Breast epithelium (tissue), 4 donors: ENCODE measurements at regions of chr19 and their contacts with region 1.

Region 1: DNA sequence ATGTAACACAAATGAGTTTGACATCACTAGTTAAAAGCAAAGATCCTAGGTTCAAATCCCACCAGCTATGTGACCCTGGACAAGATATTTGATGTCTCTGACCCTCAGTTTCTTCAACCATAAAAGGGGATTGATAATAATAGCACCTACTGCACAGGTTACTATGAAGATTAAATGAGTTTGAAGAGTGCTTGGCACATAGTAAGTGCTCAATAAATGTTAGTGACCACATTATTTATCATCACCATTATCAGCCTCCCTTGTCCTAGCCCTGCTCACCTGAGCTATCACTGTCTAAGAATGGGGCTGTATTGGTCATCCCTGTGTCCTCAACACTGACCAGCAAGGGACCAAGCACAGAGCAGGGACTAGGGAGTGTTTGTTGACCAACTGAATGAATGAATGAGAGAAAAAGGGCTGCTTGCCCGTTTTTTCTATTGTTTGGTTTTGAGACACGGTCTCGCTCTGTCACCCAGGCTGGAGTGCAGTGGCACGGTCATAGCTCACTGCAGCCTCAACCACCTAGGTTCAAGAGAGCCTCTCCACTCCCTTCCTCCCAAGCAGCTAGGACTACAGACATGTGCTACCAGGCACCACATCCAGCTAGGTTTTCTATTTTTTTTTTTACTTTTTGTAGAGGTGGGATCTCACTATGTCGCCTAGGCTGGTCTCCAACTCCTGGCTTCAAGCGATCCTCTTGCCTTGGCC is 26.6 kb upstream of the DACT3 start:
- DNase-seq: no peak
- H3K4me3 ChIP-seq: no peak overlapping the region
- H3K27ac ChIP-seq: no peak overlapping the region
- H3K4me1 ChIP-seq: no peaks in the 10 kb centered on the region
- H3K27me3 ChIP-seq: no peaks in the 10 kb centered on the region
- CTCF ChIP-seq: no peak
- POLR2A ChIP-seq: no peak

Region 2: GRCh38 chr19:46704379-46705076 is 16.9 kb after region 1 on chr19:
- intact Hi-C with region 1: no loop called
- DNase-seq: peak; percentile 41 to 75
- H3K4me3 ChIP-seq: no peak overlapping the region
- H3K27ac ChIP-seq: no peak overlapping the region
- H3K4me1 ChIP-seq: no peaks in the 10 kb centered on the region
- H3K27me3 ChIP-seq: no peaks in the 10 kb centered on the region
- CTCF ChIP-seq: peak; percentile 76 to 90 (median 79)
- POLR2A ChIP-seq: no peak

Region 3: GRCh38 chr19:47221080-47221841 is 533.7 kb after region 1 on chr19:
- intact Hi-C with region 1: loop called (anchors 5 kb)
- DNase-seq: no peak
- H3K4me3 ChIP-seq: no peak overlapping the region
- H3K27ac ChIP-seq: no peak overlapping the region
- H3K4me1 ChIP-seq: no peaks in the 10 kb centered on the region
- H3K27me3 ChIP-seq: no peaks in the 10 kb centered on the region
- CTCF ChIP-seq: no peak
- POLR2A ChIP-seq: no peak